Psoas muscle (tissue), 8 donors: ENCODE measurements at regions of chr2 and their contacts with region 1.

Region 1: GRCh38 chr2:46873375-46874032 is 42.1 kb downstream of the MCFD2 start:
- DNase-seq: peak; percentile 73 to 77
- ATAC-seq: peak; percentile 80 to 85 (median 84)
- H3K4me3 ChIP-seq: no peak overlapping the region
- H3K27ac ChIP-seq: peak overlapping the region; percentile 59
- H3K4me1 ChIP-seq: peaks cover 31% of the 10 kb centered on the region
- H3K27me3 ChIP-seq: no peaks in the 10 kb centered on the region
- CTCF ChIP-seq: no peak

Region 2: DNA sequence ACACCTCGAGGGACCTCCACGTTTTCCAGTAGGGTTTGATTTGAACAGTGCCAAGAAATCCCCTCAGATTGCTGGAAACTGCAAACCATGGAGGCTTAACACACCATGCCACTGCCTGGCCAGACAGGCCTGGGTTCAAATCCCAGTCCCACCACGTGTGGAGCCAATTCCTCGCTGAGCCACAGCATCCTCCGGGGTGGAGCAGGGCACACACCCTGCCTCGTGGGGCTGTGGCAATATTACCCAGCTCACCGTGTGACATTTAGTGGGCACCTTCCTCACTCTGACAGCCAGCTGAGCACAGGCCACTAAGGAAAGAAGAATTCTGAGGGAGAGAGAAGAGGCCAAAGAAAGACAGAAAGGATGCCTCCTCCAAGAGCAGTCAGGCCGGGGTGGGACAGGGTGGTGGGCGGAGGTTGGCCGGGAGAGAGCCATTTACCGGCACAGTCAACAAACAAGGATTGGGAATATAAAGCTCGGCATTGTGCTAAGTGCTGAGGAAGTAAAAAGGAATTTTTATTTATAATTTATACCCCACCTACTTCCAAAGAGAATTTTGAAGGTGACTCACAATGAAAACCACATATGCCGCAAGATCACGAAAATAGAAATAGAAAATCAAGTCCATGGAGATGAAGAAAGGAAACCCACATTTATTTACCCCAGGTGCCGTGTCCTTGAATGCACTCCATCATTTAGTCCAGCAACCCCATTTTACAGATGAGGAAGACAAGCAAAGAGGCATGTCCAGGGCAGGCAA is 69.4 kb before region 1 on chr2:
- intact Hi-C with region 1: loop called in 1 of 2 experiments (anchors 2 kb)
- DNase-seq: no peak
- ATAC-seq: peak in 3 of 4 donors; percentile 22 to 66 (median 23)
- H3K4me3 ChIP-seq: no peak overlapping the region
- H3K27ac ChIP-seq: no peak overlapping the region
- H3K4me1 ChIP-seq: peaks cover 9% of the 10 kb centered on the region
- H3K27me3 ChIP-seq: no peaks in the 10 kb centered on the region
- CTCF ChIP-seq: no peak

Region 3: GRCh38 chr2:46815121-46815785 is 58.3 kb before region 1 on chr2:
- intact Hi-C with region 1: loop called in 1 of 2 experiments (anchors 5 kb)
- DNase-seq: no peak
- ATAC-seq: peak in 1 of 4 donors; percentile 16
- H3K4me3 ChIP-seq: no peak overlapping the region
- H3K27ac ChIP-seq: peak overlapping the region; percentile 72
- H3K4me1 ChIP-seq: peaks cover 38% of the 10 kb centered on the region
- H3K27me3 ChIP-seq: no peaks in the 10 kb centered on the region
- CTCF ChIP-seq: no peak